ENCODE measurements at regions of chr19 and their contacts with region 1.

Region 1: DNA sequence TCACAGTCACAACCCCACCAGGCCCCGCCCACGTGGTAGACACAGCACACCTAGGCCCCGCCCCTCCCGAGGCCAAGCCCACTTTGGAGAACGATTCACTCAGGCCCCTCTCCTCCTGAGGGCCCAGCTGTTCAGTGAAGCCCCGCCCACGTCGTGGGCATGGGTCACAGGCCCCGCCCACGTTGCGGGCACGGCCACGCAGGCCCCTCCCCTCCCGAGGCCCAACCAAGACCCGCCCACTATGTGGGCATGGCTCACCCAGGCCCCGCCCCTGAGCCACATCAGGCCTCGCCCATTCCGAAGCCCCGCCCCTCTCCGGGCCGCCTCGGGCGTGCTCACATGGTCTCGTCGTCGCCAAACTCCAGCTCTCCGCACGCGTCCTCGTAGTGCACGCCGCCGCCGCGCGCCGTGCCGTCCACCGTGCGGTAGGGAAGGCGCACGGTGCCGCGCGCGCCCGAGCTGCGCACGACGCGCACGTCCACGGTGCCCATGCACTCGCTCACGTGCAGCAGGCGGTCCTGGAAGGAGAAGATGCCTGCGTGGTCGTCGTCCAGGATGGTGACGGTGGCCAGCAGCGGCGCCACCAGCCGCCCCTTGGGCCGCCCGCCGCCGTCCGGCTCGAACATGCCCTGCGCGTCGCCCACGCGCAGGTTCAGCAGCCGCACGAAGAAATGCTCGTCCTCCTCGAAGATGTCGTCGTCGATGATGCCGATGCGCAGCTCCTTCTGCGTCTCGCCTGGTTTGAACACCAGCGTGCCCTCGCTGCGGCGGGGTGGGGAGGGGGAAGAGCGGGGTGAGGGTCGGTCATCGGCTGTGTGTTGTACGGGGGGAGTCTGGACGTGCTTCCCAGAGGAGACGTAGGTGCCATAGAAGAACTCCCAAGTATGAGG is 24.0 kb downstream of the SLC8A2 start:
- DNase-seq: no peak
- H3K4me3 ChIP-seq: peak overlapping the region in 1 of 2 donors; percentile 25
- H3K27ac ChIP-seq: no peak overlapping the region
- H3K4me1 ChIP-seq: peaks cover 26% of the 10 kb centered on the region
- H3K27me3 ChIP-seq: peaks cover 11% of the 10 kb centered on the region
- CTCF ChIP-seq: no peak
- POLR2A ChIP-seq: no peak

Region 2: DNA sequence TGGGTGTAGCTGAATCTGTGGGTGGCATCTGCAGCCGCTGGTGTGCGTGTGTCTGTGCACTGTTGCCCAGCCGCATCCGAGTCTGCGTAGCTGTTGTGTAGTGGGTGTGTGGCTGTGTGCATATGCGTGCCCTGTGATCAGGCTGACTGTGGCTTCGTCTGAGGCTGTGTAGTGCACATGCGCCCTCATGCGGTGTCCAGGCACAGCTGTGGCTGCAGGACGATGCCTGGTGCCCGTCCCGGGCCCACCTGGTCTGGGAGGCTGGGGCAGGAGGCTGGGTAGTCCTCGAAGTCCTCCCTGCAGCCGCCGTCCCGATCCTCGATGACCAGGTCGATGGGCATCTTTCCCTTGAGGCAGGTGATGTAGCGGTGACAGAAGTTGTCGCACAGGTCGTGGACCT is 33.2 kb before region 1 on chr19:
- intact Hi-C with region 1: no loop called
- DNase-seq: no peak
- H3K4me3 ChIP-seq: no peak overlapping the region
- H3K27ac ChIP-seq: no peak overlapping the region
- H3K4me1 ChIP-seq: peaks cover 19% of the 10 kb centered on the region
- H3K27me3 ChIP-seq: no peaks in the 10 kb centered on the region
- CTCF ChIP-seq: no peak
- POLR2A ChIP-seq: no peak

Region 3: GRCh38 chr19:47676811-47677210 is 229.1 kb after region 1 on chr19:
- intact Hi-C with region 1: loop called (anchors 10 kb)
- DNase-seq: no peak
- H3K4me3 ChIP-seq: no peak overlapping the region
- H3K27ac ChIP-seq: no peak overlapping the region
- H3K4me1 ChIP-seq: no peaks in the 10 kb centered on the region
- H3K27me3 ChIP-seq: no peaks in the 10 kb centered on the region
- CTCF ChIP-seq: no peak
- POLR2A ChIP-seq: no peak

Measured in vagina (tissue), 2 donors.